Head of caudate nucleus (tissue), 42 donors: ENCODE measurements at regions of chr21 and their contacts with region 1.

Region 1: GRCh38 chr21:33266050-33266788 is at the start of gene IL10RB:
- DNase-seq: peak; percentile 25 to 85 (median 76)

Region 2: DNA sequence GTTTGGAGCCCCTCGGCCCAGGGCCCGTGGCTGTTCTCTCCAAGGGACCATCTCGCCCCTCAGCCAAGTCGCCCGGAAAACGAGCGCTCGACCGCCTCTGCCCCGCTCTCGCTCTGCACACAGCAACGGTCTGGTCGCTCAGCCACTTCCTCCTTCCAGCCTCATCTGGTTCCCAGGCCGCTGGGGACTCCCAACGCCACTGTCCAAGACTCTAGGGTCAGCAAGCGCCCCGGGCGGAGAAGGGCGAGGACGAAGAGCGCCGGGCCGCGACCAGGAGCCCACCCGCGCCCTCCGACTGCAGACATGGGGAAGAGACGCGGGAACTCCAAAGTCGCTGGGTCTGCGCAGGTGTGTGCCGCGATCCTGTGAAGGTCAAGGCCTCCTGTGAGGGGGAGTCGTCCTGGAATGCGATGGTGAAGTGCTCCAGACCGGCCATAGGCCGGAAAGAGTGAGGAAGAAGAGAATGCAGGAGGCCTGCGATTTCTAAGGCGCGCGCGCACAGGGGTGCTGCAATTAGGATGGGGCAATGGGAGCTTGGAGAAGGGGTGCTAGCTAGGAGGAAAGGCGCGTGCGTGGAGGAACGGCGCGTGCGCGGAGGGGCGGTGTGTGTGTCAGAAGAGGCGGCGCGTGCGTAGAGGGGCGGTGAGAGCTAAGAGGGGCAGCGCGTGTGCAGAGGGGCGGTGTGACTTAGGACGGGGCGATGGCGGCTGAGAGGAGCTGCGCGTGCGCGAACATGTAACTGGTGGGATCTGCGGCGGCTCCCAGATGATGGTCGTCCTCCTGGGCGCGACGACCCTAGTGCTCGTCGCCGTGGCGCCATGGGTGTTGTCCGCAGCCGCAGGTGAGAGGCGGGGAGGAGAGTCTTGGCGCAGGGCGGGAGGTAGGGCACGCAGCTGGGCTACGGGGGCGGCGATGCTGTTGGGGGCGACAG is 58.3 kb after region 1 on chr21 and contains the start of gene IFNAR1:
- intact Hi-C with region 1: no loop called
- DNase-seq: peak; percentile 91 to 99 (median 96)

Region 3: GRCh38 chr21:33360881-33361602 is 94.8 kb after region 1 on chr21:
- intact Hi-C with region 1: loop called (anchors 10 kb)
- DNase-seq: peak; percentile 66 to 93 (median 84)